ENCODE measurements at regions of chr17 and their contacts with region 1.

Region 1: GRCh38 chr17:63773381-63774140 is at the start of gene CCDC47:
- DNase-seq: peak; percentile 96
- ATAC-seq: peak; percentile 76
- H3K4me3 Mint-ChIP-seq: peak within 1 kb of the TSS; percentile 92
- H3K27ac Mint-ChIP-seq: peak within 1 kb of the TSS; percentile 99
- H3K4me1 Mint-ChIP-seq: peaks cover 59% of the 10 kb centered on the region
- H3K27me3 Mint-ChIP-seq: no peaks in the 10 kb centered on the region
- CTCF ChIP-seq: no peak
- total RNA-seq, gene CCDC47: 41.4 and 47.6 TPM in 2 replicates

Region 2: GRCh38 chr17:63075969-63076368 is 697.6 kb before region 1 on chr17:
- CTCF ChIA-PET with region 1: no interaction called
- POLR2A ChIA-PET with region 1: no interaction called
- intact Hi-C with region 1: no loop called
- DNase-seq: no peak
- ATAC-seq: no peak
- H3K4me3 Mint-ChIP-seq: no peak overlapping the region
- H3K27ac Mint-ChIP-seq: no peak overlapping the region
- H3K4me1 Mint-ChIP-seq: peaks cover 5% of the 10 kb centered on the region
- H3K27me3 Mint-ChIP-seq: no peaks in the 10 kb centered on the region
- CTCF ChIP-seq: no peak

Region 3: DNA sequence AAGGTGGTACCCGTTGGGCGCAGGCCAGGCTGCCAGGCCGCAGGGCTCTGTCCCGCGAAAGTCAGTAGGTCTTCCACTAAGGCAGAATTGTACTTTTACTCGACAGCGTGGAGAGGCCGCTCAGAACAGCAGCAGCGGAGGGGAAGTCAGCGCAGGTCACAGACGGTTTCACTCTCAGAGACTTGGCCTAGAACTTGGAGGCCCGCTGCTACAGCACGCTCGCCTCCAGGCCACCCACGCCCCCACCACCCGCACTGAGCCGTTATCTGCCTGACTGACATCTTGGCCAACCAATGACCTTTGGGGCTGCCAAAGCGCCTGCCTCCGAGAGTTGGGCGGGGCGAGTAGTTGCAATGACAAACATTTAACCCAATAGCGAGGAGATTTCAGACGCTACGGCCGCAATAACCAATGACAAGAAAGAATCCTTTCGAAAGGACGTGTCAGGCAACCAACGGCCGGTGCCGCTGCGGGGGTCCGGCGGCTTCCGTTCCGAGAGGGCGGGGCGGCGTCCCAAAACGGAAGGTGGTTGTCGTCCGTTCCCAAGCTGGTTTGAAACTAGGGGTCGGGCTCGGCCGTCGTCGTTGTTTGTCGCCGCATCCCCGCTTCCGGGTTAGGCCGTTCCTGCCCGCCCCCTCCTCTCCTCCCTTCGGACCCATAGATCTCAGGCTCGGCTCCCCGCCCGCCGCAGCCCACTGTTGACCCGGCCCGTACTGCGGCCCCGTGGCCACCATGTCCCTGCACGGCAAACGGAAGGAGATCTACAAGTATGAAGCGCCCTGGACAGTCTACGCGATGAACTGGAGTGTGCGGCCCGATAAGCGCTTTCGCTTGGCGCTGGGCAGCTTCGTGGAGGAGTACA is 223.4 kb before region 1 on chr17 and contains the start of gene DCAF7:
- CTCF ChIA-PET with region 1: no interaction called
- POLR2A ChIA-PET with region 1: interaction called, 18 read pairs
- intact Hi-C with region 1: loop called (anchors 1 kb)
- DNase-seq: peak; percentile 94
- ATAC-seq: peak; percentile 94
- H3K4me3 Mint-ChIP-seq: peak within 1 kb of the TSS; percentile 99
- H3K27ac Mint-ChIP-seq: peak within 1 kb of the TSS; percentile 95
- H3K4me1 Mint-ChIP-seq: peaks cover 56% of the 10 kb centered on the region
- H3K27me3 Mint-ChIP-seq: no peaks in the 10 kb centered on the region
- CTCF ChIP-seq: no peak
- total RNA-seq, gene DCAF7: 91.9 and 103 TPM in 2 replicates

Region 4: GRCh38 chr17:63735691-63736090 is 37.9 kb before region 1 on chr17:
- CTCF ChIA-PET with region 1: no interaction called
- POLR2A ChIA-PET with region 1: interaction called, 256 read pairs
- intact Hi-C with region 1: no loop called
- DNase-seq: no peak
- ATAC-seq: no peak
- H3K4me3 Mint-ChIP-seq: no peak overlapping the region
- H3K27ac Mint-ChIP-seq: no peak overlapping the region
- H3K4me1 Mint-ChIP-seq: peaks cover 10% of the 10 kb centered on the region
- H3K27me3 Mint-ChIP-seq: no peaks in the 10 kb centered on the region
- CTCF ChIP-seq: no peak

Region 5: GRCh38 chr17:63751806-63752205 is 21.8 kb before region 1 on chr17:
- CTCF ChIA-PET with region 1: no interaction called
- POLR2A ChIA-PET with region 1: interaction called, 16 read pairs
- intact Hi-C with region 1: loop called (anchors 2 kb)
- DNase-seq: no peak
- ATAC-seq: peak; percentile 77
- H3K4me3 Mint-ChIP-seq: peak overlapping the region; percentile 48
- H3K27ac Mint-ChIP-seq: peak overlapping the region; percentile 77
- H3K4me1 Mint-ChIP-seq: peaks cover 9% of the 10 kb centered on the region
- H3K27me3 Mint-ChIP-seq: no peaks in the 10 kb centered on the region
- CTCF ChIP-seq: no peak

Region 6: GRCh38 chr17:63819585-63820537 is 46.3 kb after region 1 on chr17:
- CTCF ChIA-PET with region 1: no interaction called
- POLR2A ChIA-PET with region 1: interaction called, 10 read pairs
- intact Hi-C with region 1: no loop called
- DNase-seq: no peak
- ATAC-seq: peak; percentile 31
- H3K4me3 Mint-ChIP-seq: no peak overlapping the region
- H3K27ac Mint-ChIP-seq: peak overlapping the region; percentile 50
- H3K4me1 Mint-ChIP-seq: peaks cover 32% of the 10 kb centered on the region
- H3K27me3 Mint-ChIP-seq: no peaks in the 10 kb centered on the region
- CTCF ChIP-seq: no peak

Region 7: DNA sequence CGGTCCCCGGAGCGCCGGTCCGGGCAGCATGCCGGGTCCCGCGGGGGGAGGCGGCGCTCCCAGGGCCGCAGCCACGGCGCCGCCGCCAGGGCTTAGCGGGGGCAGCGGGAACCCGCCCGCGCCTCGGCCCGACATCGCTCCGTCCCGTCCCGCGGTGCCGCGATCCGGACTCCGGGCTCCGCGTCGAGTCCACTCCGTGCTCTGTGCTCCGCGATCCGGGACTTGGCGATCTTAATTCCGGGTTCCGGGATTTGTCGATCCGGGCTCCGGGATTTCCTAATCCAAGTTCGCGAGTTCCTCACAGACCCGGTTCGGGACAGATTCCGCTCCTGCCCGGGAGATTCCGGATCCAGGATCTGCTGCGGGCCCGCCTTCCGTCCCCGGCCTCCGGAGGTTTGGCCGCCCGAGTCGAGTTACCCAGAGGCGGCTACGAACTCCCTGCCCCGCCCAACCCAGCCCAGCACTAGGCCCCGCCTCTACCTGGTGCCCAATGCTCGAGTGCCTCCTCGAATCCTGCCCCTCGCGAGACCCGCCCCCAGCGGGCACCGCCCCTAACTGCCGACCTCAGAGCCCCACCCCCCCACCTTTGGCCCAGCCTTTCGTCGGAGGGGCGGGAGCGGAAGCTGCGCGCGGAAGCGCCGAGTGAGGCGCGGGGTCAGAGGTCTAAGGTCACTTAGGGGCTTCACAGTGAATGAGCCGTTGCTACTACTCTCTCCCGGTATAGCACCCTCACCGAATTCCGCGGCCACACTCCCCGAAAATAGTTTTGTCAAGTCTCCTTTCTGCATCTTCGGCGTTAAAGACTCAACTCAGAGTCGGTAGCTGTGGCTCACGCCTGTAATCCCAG is 69.2 kb after region 1 on chr17 and contains the start of gene SMARCD2:
- CTCF ChIA-PET with region 1: no interaction called
- POLR2A ChIA-PET with region 1: interaction called, 72 read pairs
- intact Hi-C with region 1: loop called (anchors 1 kb)
- DNase-seq: peak; percentile 96
- ATAC-seq: peak; percentile 90
- H3K4me3 Mint-ChIP-seq: peak within 1 kb of the TSS; percentile 94
- H3K27ac Mint-ChIP-seq: peak within 1 kb of the TSS; percentile 95
- H3K4me1 Mint-ChIP-seq: peaks cover 49% of the 10 kb centered on the region
- H3K27me3 Mint-ChIP-seq: no peaks in the 10 kb centered on the region
- CTCF ChIP-seq: no peak
- total RNA-seq, gene SMARCD2: 114 and 117 TPM in 2 replicates